HAP-1 (cell line): ENCODE measurements at regions of chr4 and their contacts with region 1.

Region 1: DNA sequence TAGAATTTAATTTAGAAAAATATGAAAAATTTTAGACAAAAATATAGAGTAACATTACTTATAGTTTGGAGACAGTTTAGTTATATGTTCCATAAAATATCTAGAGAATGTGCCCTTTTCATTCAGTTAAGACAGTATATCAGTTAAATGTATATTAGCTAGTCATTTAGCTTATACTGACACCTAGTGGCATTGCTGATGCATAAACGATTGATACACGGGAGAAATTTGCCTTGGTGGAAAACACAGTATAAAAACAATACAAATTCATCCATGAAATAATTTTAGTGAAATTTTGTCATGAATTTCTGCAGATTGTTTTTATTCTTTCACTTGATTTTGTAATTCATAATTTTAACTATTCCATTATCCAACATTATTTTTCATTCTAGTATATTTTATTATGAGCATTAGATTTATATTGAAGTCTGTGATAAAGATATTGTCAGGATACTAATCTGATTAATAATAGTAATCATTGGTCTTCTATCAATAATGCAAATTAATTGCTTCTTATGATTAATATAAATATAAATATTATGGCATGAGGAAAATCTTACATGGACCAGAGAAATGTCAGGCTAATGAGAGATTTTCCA is 219.0 kb downstream of the TLL1 start:
- DNase-seq: peak in 1 of 2 experiments; percentile 48
- H3K4me3 ChIP-seq: no peak overlapping the region
- H3K4me1 ChIP-seq: peaks cover 2% of the 10 kb centered on the region
- H3K27me3 ChIP-seq: no peaks in the 10 kb centered on the region

Region 2: DNA sequence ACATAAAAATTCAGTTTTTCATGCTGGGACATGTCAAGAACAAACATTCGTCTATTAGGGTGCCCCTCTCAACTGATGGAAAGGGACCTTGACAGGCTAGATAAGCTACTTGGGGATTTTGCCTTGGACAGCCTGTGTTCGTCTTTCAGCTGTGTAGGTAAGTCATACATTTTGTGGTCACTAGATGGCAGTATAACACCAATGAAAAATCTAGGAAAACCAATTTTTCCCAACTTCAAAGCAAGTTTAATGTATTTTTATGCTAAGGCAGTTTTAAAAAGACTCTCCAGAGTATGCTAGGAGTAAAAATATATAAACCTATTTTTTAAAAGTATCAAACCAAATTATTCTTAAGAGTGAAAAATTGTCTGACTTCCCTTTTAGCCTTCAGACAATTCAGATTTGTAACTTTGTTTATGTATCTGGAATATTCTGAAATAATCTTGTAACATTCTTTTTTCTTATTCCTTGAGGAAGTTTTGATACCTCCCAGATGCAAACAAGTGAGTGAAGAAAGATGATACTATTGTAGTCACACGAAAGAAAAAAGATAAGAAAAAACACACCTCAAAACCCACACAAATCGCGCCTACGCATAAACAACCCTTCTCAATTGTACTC is 554.9 kb before region 1 on chr4:
- in situ Hi-C with region 1: loop called (anchors 10 kb)
- DNase-seq: peak; percentile 17 to 32
- H3K4me3 ChIP-seq: no peak overlapping the region
- H3K4me1 ChIP-seq: peaks cover 3% of the 10 kb centered on the region; the same call in 1 of the 2 replicates
- H3K27me3 ChIP-seq: no peaks in the 10 kb centered on the region; the same call in 1 of the 2 replicates

Region 3: DNA sequence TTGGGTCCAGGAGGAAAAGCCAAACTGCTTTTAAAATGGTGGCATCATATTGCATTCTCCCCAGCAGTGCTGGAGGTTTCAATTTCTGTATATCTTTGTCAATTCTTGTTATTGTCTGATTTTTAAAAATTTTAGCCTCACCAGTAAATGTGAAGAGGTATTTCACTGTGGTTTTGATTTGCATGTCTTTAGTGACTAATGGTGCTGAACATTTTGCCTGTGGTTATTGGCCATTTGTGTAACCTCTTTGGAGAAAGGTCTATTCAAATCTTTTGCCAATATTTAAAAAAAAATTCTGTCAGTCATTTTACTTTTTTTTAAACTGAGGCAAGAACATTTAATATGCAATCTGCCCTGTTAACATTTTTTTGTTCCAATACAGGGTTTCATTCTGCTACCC is 103.1 kb after region 1 on chr4:
- in situ Hi-C with region 1: no loop called
- DNase-seq: no peak
- H3K4me3 ChIP-seq: no peak overlapping the region
- H3K4me1 ChIP-seq: peaks cover 26% of the 10 kb centered on the region
- H3K27me3 ChIP-seq: no peaks in the 10 kb centered on the region